Endothelial cell of umbilical vein (primary cell): ENCODE measurements at regions of chr12 and their contacts with region 1.

Region 1: DNA sequence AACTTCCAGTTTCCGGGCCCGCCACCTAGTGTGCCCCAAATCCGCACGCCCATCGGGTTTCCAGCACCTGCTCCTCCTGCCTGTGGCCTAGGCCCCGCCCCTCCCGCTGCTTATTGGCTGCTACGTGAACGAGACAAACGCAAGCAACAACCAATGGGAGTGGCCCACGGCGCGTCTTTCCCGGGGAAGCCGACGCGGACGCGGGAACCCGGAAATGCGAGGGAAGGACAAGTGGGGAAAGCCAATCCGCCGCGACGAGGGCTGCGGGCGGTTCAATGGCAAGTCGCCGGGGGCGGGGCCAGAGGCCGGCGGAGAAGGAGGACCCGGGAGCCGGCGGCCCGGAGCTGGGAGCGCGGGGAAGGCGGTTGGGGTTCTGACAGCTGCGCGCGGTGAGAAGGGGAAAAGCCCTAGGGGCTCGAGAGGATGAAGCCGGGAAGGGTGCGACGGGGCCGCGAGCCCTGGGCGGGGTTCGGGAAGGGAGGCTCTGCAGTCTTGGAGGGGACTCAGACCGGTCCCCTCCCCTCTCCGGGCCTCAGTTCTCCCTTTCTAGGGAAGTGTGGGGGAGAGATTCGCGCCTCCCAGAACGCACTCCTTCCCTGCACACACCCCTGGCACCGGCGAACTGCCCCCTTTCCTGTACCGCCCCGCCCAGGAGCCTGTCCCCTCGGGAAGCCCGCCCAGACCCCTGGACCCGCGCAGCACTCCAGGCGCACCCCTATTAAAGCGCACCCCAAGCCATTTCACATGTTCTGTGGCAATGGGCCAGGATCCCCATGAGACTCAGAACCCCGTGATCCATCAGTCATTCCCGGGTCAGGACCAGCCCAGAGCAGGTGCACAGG is at the start of gene FICD:
- DNase-seq: peak; percentile 99
- H3K4me3 ChIP-seq: peak within 1 kb of the TSS; percentile 63 to 98 (median 73)
- H3K27ac ChIP-seq: peak within 1 kb of the TSS; percentile 52
- H3K4me1 ChIP-seq: peaks cover 7% of the 10 kb centered on the region
- H3K27me3 ChIP-seq: no peaks in the 10 kb centered on the region
- CTCF ChIP-seq: no peak
- POLR2A ChIP-seq: peak; percentile 50
- total RNA-seq, gene FICD: 6.0 and 6.1 TPM in 2 replicates

Region 2: DNA sequence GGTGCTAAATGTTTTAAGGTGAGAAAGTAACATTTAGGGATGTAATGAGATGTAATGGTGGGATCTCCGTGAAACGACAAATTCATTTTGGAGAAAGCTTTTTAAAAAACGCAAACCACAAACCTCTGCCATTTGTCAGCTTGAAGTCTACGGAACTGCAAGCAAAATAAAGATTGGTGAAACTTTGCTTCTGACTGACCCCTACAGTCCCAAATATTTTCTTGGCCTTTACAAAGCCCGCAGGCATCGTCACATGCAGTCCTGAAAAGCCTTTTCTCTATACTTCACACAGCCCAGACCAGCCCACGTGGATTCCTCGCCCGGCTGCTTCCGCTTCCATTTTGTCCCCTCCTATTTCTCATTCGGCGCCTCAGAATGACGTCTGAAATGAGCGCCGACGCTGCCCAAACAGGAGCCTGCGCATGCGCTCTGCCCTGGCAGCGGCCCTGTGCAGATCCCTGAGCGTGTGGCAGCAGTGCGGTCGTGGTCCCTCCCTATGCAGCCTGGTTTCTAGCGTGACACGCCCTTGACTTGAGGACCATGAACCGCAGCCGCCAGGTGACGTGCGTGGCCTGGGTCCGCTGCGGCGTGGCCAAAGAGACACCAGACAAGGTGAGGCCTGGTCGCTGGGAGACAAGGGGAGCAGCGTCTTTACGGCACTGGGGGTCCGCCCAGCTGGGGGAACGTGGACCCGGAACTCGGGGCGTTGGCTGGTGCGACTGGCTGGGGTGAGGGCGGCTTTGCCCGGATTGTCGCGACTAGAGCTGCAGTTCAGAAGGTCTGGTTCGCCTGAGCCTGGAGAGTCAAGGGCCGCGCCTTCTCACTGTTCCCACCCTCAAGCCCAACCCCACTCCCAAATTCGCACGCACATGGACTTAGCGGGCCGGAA is 829.6 kb before region 1 on chr12 and contains the start of gene PWP1:
- CTCF ChIA-PET with region 1: no interaction called
- POLR2A ChIA-PET with region 1: no interaction called
- dilution Hi-C with region 1: no loop called
- intact Hi-C with region 1: loop called (anchors 1 kb)
- DNase-seq: peak; percentile 97
- H3K4me3 ChIP-seq: peak within 1 kb of the TSS; percentile 28 to 80 (median 67)
- H3K27ac ChIP-seq: peak within 1 kb of the TSS; percentile 51
- H3K4me1 ChIP-seq: peaks cover 7% of the 10 kb centered on the region
- H3K27me3 ChIP-seq: no peaks in the 10 kb centered on the region
- CTCF ChIP-seq: no peak
- POLR2A ChIP-seq: peak; percentile 74
- total RNA-seq, gene PWP1: 68.6 and 70.8 TPM in 2 replicates

Region 3: DNA sequence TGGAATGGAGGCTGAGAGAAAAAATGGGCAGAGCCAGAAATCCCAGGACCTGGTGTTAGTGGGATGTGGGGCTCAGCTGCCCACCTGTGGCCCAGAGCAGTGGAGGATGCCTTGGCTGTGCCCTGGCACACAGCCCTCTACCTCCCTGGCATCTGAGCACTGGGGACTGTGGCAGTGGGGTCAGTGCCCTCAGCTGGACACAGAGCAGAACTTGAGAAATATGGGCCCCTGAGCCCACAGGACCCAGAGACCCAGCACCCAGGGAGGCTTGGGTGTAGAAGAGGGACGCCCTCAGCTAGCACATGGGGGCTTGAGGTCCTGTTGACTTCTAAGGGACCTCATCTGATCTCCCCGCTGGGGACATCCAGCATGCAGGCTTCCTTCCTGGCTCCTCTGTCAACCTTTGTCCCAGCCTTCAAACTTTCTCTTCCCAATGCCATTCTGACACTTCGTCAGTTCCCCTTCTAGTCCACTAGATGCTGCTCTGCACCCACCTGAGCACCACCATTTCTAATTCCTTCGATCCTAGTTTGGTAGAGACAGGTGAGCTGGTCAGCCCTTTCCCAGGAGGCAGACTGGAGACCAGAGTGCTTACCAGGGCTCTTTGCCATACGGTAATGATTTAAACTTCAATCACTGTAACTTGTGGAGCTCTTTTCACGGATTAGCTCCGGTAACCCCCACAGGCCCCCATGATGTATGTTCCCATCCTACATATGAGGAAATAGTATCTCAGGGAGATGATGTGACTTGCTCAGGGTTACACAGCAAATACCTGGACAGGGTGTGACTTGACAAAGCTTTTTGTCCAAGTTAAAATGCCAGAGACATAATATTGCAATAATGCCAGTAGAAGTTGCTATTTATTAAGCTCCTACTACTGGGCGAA is 597.0 kb before region 1 on chr12:
- CTCF ChIA-PET with region 1: interaction called, 31 read pairs
- POLR2A ChIA-PET with region 1: no interaction called
- dilution Hi-C with region 1: no loop called
- intact Hi-C with region 1: loop called (anchors 1 kb)
- DNase-seq: no peak
- H3K4me3 ChIP-seq: no peak overlapping the region
- H3K27ac ChIP-seq: no peak overlapping the region
- H3K4me1 ChIP-seq: no peaks in the 10 kb centered on the region
- H3K27me3 ChIP-seq: no peaks in the 10 kb centered on the region
- CTCF ChIP-seq: peak; percentile 24 to 54
- POLR2A ChIP-seq: no peak

Region 4: DNA sequence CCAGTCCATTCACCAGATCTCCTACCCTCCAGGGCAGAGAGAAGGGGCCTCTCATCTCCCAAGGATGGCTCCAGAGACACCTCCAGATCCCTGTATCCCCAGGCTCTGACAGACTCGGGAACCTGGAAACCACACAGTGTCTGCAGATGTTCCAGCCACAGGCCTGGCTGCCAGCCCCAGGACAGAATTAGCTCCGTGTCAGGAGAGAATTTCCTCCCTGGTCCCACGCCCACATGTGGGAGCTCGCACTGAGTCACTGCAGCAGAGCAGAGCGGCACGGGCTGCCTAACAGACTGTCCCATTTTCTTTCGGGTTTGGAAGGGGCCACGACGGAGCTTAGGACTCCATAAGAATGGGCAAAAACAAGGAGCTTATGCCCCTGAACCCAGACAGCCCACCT is 209.7 kb before region 1 on chr12:
- CTCF ChIA-PET with region 1: no interaction called
- POLR2A ChIA-PET with region 1: no interaction called
- dilution Hi-C with region 1: no loop called
- intact Hi-C with region 1: loop called (anchors 5 kb)
- DNase-seq: no peak
- H3K4me3 ChIP-seq: no peak overlapping the region
- H3K27ac ChIP-seq: peak overlapping the region; percentile 79
- H3K4me1 ChIP-seq: peaks cover 39% of the 10 kb centered on the region
- H3K27me3 ChIP-seq: no peaks in the 10 kb centered on the region
- CTCF ChIP-seq: no peak
- POLR2A ChIP-seq: no peak

Region 5: GRCh38 chr12:108618079-108618952 is 103.1 kb after region 1 on chr12:
- CTCF ChIA-PET with region 1: interaction called, 5 read pairs
- POLR2A ChIA-PET with region 1: no interaction called
- dilution Hi-C with region 1: no loop called
- intact Hi-C with region 1: loop called (anchors 5 kb)
- DNase-seq: peak; percentile 71
- H3K4me3 ChIP-seq: no peak overlapping the region
- H3K27ac ChIP-seq: no peak overlapping the region
- H3K4me1 ChIP-seq: peaks cover 13% of the 10 kb centered on the region
- H3K27me3 ChIP-seq: no peaks in the 10 kb centered on the region
- CTCF ChIP-seq: peak; percentile 92 to 96
- POLR2A ChIP-seq: no peak

Region 6: GRCh38 chr12:108850854-108851573 is 335.8 kb after region 1 on chr12:
- CTCF ChIA-PET with region 1: no interaction called
- POLR2A ChIA-PET with region 1: no interaction called
- dilution Hi-C with region 1: no loop called
- intact Hi-C with region 1: loop called (anchors 5 kb)
- DNase-seq: peak; percentile 95
- H3K4me3 ChIP-seq: peak overlapping the region in 2 of 3 experiments; percentile 47 to 74
- H3K27ac ChIP-seq: peak overlapping the region; percentile 98
- H3K4me1 ChIP-seq: peaks cover 51% of the 10 kb centered on the region
- H3K27me3 ChIP-seq: no peaks in the 10 kb centered on the region
- CTCF ChIP-seq: peak; percentile 20 to 28
- POLR2A ChIP-seq: no peak